ENCODE measurements at regions of chr11 and their contacts with region 1.

Region 1: GRCh38 chr11:15819679-15820286 is 536.6 kb downstream of the SOX6 start:
- DNase-seq: peak; percentile 25 to 86
- H3K4me3 ChIP-seq: no peak overlapping the region
- H3K27ac ChIP-seq: no peak overlapping the region
- H3K4me1 ChIP-seq: no peaks in the 10 kb centered on the region
- H3K27me3 ChIP-seq: peaks cover 0 to 1% (median 0%) of the 10 kb centered on the region in 4 experiments; a peak in 1 of 7 replicates
- CTCF ChIP-seq: peak; percentile 86 to 99 (median 97)
- EP300 ChIP-seq: no peak
- POLR2A ChIP-seq: no peak
- RAD21 ChIP-seq: peak; percentile 82 to 86

Region 2: GRCh38 chr11:15327786-15328231 is 492.0 kb before region 1 on chr11:
- CTCF ChIA-PET with region 1: interaction called, 11 read pairs
- POLR2A ChIA-PET with region 1: no interaction called
- DNase-seq: peak; percentile 60 to 96
- H3K4me3 ChIP-seq: no peak overlapping the region
- H3K27ac ChIP-seq: no peak overlapping the region
- H3K4me1 ChIP-seq: peaks cover 0 to 3% (median 1%) of the 10 kb centered on the region in 4 experiments; a peak in 2 of 7 replicates
- H3K27me3 ChIP-seq: no peaks in the 10 kb centered on the region; a peak in 2 of 7 replicates
- CTCF ChIP-seq: peak; percentile 86 to 90 (median 89)
- EP300 ChIP-seq: no peak
- POLR2A ChIP-seq: no peak
- RAD21 ChIP-seq: peak; percentile 98 to 99

Region 3: DNA sequence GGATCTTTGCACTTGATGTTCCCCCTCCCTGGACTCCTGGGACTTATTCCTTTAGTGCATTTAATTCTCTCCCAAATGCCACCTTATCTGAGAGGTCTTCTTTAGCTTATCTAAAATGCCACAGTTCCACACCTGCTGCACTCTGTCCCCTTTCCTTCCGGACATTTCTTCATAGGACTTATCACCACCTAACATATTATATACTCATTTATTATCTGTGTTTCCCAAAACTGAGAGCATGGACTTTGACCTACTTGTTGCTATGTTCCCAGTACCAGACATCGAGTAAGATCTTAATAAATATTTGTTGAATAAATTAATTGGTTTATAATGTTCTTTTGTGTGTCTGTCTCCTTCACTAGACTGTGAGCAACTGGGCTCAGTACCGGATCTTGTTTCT is 119.8 kb before region 1 on chr11:
- CTCF ChIA-PET with region 1: no interaction called
- POLR2A ChIA-PET with region 1: no interaction called
- DNase-seq: no peak
- H3K4me3 ChIP-seq: no peak overlapping the region
- H3K27ac ChIP-seq: no peak overlapping the region
- H3K4me1 ChIP-seq: no peaks in the 10 kb centered on the region
- H3K27me3 ChIP-seq: no peaks in the 10 kb centered on the region; a peak in 1 of 7 replicates
- CTCF ChIP-seq: no peak
- EP300 ChIP-seq: no peak
- POLR2A ChIP-seq: no peak
- RAD21 ChIP-seq: no peak

Region 4: GRCh38 chr11:15800111-15800800 is 19.5 kb before region 1 on chr11:
- CTCF ChIA-PET with region 1: interaction called, 16 read pairs
- POLR2A ChIA-PET with region 1: no interaction called
- DNase-seq: no peak
- H3K4me3 ChIP-seq: no peak overlapping the region
- H3K27ac ChIP-seq: no peak overlapping the region
- H3K4me1 ChIP-seq: no peaks in the 10 kb centered on the region
- H3K27me3 ChIP-seq: no peaks in the 10 kb centered on the region
- CTCF ChIP-seq: no peak
- EP300 ChIP-seq: no peak
- POLR2A ChIP-seq: no peak
- RAD21 ChIP-seq: no peak

Region 5: GRCh38 chr11:15805726-15806125 is 14.1 kb before region 1 on chr11:
- CTCF ChIA-PET with region 1: interaction called, 18 read pairs
- POLR2A ChIA-PET with region 1: no interaction called
- DNase-seq: no peak
- H3K4me3 ChIP-seq: no peak overlapping the region
- H3K27ac ChIP-seq: no peak overlapping the region
- H3K4me1 ChIP-seq: no peaks in the 10 kb centered on the region
- H3K27me3 ChIP-seq: no peaks in the 10 kb centered on the region
- CTCF ChIP-seq: no peak
- EP300 ChIP-seq: no peak
- POLR2A ChIP-seq: no peak
- RAD21 ChIP-seq: no peak

Region 6: GRCh38 chr11:15913261-15913660 is 93.5 kb after region 1 on chr11:
- CTCF ChIA-PET with region 1: interaction called, 21 read pairs
- POLR2A ChIA-PET with region 1: no interaction called
- DNase-seq: no peak
- H3K4me3 ChIP-seq: no peak overlapping the region
- H3K27ac ChIP-seq: no peak overlapping the region
- H3K4me1 ChIP-seq: no peaks in the 10 kb centered on the region
- H3K27me3 ChIP-seq: no peaks in the 10 kb centered on the region; a peak in 1 of 7 replicates
- CTCF ChIP-seq: no peak
- EP300 ChIP-seq: no peak
- POLR2A ChIP-seq: no peak
- RAD21 ChIP-seq: no peak; a peak in 1 of 4 replicates

Region 7: GRCh38 chr11:15923183-15923582 is 103.4 kb after region 1 on chr11:
- CTCF ChIA-PET with region 1: interaction called, 39 read pairs
- POLR2A ChIA-PET with region 1: no interaction called
- DNase-seq: no peak
- H3K4me3 ChIP-seq: no peak overlapping the region
- H3K27ac ChIP-seq: no peak overlapping the region
- H3K4me1 ChIP-seq: no peaks in the 10 kb centered on the region
- H3K27me3 ChIP-seq: no peaks in the 10 kb centered on the region; a peak in 1 of 7 replicates
- CTCF ChIP-seq: peak in 2 of 3 experiments; percentile 50 to 53; a peak in 3 of 4 replicates
- EP300 ChIP-seq: no peak
- POLR2A ChIP-seq: no peak
- RAD21 ChIP-seq: peak; percentile 66 to 71

Region 8: DNA sequence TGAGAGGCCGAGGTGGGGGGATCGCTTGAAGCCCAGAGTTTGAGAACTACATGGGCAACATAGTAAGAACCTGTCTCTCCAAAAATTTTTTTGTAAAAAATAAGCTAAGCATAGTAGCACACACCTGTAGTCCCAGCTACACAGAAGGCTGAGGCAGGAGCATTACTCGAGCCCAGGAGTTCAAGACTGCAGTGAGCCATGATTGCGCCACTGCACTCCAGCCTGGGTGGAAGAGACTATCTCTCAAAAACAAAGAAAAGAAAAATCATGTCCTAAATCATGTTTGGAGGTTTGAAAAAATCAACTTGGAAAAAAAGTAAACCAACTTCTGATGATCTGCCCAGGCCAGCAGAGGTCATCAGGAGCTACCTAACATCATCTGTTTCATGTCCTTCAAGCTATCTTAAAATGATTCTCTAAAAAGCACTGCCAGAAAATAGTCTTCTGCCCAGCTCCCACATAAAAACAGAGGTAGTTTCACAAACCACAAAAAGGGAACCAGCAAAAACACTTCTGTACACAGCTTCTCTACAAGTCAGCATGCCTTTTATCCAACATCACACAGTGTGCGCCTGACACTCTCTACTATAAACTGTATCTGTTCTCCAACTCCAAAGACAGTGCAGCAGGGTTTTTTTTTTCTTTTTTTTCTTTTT is 371.6 kb after region 1 on chr11:
- CTCF ChIA-PET with region 1: no interaction called
- POLR2A ChIA-PET with region 1: no interaction called
- DNase-seq: no peak
- H3K4me3 ChIP-seq: no peak overlapping the region
- H3K27ac ChIP-seq: no peak overlapping the region
- H3K4me1 ChIP-seq: no peaks in the 10 kb centered on the region; a peak in 1 of 7 replicates
- H3K27me3 ChIP-seq: no peaks in the 10 kb centered on the region
- CTCF ChIP-seq: peak in 2 of 3 experiments; percentile 2 to 13; a peak in 1 of 4 replicates
- EP300 ChIP-seq: no peak
- POLR2A ChIP-seq: no peak
- RAD21 ChIP-seq: peak; percentile 27 to 40

Measured in H1 (cell line).